ENCODE measurements at regions of chr18 and their contacts with region 1.

Region 1: GRCh38 chr18:63177919-63178821 is 141.4 kb downstream of the BCL2 start:
- DNase-seq: no peak
- ATAC-seq: peak; percentile 16; the same call in 2 of the 3 replicates
- H3K4me3 ChIP-seq: no peak overlapping the region
- H3K27ac ChIP-seq: peak overlapping the region; percentile 64
- H3K4me1 ChIP-seq: peaks cover 81% of the 10 kb centered on the region
- H3K27me3 ChIP-seq: no peaks in the 10 kb centered on the region
- CTCF ChIP-seq: no peak
- EP300 ChIP-seq: no peak; a peak in 1 of 4 replicates
- POLR2A ChIP-seq: no peak
- RAD21 ChIP-seq: 0 out of 2 replicates have a peak, but pooled peaks have one; percentile 12

Region 2: DNA sequence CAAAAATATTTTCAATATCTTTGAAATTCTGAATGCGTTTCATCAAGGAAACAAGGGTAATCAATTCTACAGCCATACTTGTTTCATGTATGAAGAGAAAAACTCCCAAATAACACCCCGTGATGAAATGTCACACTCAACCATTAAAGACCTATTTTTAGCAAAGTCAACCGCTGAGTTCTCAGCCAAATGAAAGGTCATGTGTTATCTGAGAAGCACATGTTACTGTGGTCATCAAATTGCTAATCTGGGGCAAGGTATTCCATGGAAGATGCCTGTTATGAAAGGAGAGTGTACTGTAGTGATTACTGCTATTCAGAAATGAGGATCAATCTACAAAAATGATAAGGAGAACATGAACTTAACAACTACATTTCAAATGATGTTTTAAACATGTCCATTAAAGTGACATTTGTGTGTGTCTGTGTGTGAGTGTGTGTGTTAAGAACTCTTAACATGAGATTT is 14.7 kb after region 1 on chr18:
- CTCF ChIA-PET with region 1: interaction called, 5 read pairs
- POLR2A ChIA-PET with region 1: interaction called, 4 read pairs
- RAD21 ChIA-PET with region 1: interaction called, 15 read pairs
- SMC1A ChIA-PET with region 1: interaction called, 18 read pairs
- in situ Hi-C with region 1: no loop called
- intact Hi-C with region 1: no loop called
- DNase-seq: peak; percentile 72
- ATAC-seq: peak; percentile 75
- H3K4me3 ChIP-seq: no peak overlapping the region
- H3K27ac ChIP-seq: peak overlapping the region; percentile 51
- H3K4me1 ChIP-seq: peaks cover 27% of the 10 kb centered on the region
- H3K27me3 ChIP-seq: no peaks in the 10 kb centered on the region
- CTCF ChIP-seq: no peak
- EP300 ChIP-seq: peak; percentile 85 to 86
- POLR2A ChIP-seq: no peak
- RAD21 ChIP-seq: no peak

Region 3: DNA sequence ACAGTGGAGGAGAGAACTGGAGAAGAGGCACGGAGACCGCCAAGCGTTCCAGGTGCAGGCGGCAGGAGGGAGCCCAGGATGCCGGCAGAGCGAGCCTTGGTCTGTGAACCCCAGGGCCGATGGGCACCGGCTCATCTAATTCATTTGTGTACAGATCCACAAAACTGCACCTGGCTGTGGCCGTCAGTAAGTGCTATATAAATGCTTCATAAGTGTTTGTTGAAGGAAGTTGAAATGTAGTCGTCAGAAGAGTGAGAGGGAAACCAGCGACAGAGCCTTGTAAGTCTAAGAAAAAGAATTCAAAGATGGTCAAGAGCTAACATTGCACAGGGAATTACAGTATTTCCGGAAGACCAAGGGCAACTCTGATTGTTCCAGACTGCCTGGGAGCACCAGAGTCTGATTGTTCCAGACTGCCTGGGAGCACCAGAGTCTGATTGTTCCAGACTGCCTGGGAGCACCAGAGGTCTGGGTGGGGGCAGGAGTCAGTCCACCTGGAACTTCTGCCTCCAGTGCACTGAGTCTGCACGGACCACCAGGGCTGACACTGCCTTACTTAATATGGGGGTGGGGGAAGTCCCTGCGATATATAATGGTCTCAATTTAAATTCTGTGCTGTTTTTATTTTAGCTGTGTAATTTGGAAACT is 29.1 kb after region 1 on chr18:
- CTCF ChIA-PET with region 1: interaction called, 4 read pairs
- POLR2A ChIA-PET with region 1: interaction called, 3 read pairs
- RAD21 ChIA-PET with region 1: no interaction called
- SMC1A ChIA-PET with region 1: interaction called, 12 read pairs
- in situ Hi-C with region 1: no loop called
- intact Hi-C with region 1: no loop called
- DNase-seq: no peak
- ATAC-seq: peak; percentile 64
- H3K4me3 ChIP-seq: peak overlapping the region; percentile 50; the same call in 1 of the 2 replicates
- H3K27ac ChIP-seq: peak overlapping the region; percentile 53
- H3K4me1 ChIP-seq: peaks cover 56% of the 10 kb centered on the region
- H3K27me3 ChIP-seq: no peaks in the 10 kb centered on the region
- CTCF ChIP-seq: no peak
- EP300 ChIP-seq: no peak
- POLR2A ChIP-seq: no peak
- RAD21 ChIP-seq: no peak